PC-9 (cell line): ENCODE measurements at regions of chr19 and their contacts with region 1.

Region 1: DNA sequence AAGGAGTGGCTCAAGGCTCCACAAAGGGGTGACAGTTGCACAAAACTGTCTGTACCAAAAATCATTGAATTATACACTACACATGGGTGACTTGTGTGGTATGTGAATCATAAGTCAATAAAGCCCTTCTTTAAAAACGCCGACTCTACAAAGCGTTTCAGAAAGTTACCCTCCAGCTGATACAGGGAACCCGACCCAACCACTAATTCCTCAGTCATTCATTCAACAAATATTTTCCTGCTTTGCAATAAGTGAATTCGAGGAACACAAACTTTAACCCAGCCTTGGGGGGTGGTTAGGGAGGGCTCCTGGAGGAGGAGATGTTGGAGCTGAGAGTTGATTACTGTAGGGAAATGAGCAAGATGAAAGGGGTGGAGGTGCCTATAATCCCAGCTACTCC is 32.0 kb downstream of the LTBP4 start:
- DNase-seq: peak in 1 of 2 experiments; percentile 45
- H3K4me3 ChIP-seq: no peak overlapping the region
- H3K27ac ChIP-seq: no peak overlapping the region
- H3K4me1 ChIP-seq: no peaks in the 10 kb centered on the region
- H3K27me3 ChIP-seq: no peaks in the 10 kb centered on the region
- CTCF ChIP-seq: no peak

Region 2: DNA sequence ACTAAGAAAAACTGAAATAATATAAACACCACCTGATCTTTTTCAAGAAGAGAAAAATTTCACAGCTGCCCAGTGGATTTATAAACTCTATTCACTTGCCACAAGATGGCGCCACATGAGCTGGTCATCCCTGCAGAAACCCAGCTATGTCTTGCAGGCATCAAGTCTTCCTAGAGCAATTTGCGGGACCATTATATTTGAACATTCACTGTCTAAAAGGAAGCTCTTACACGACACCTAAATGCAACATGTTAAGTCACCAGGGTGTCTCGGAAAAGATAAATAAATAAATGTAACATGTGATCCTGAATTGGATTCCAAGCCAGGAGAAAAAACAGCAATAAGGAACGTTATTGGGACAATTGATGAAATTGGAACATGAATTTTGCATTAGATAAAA is 327.8 kb before region 1 on chr19:
- CTCF ChIA-PET with region 1: interaction called, 3 read pairs
- POLR2A ChIA-PET with region 1: no interaction called
- intact Hi-C with region 1: loop called (anchors 1 kb)
- DNase-seq: peak; percentile 67 to 74
- H3K4me3 ChIP-seq: no peak overlapping the region
- H3K27ac ChIP-seq: no peak overlapping the region
- H3K4me1 ChIP-seq: no peaks in the 10 kb centered on the region
- H3K27me3 ChIP-seq: no peaks in the 10 kb centered on the region
- CTCF ChIP-seq: peak; percentile 86

Region 3: GRCh38 chr19:40549007-40549708 is 84.0 kb before region 1 on chr19:
- CTCF ChIA-PET with region 1: no interaction called
- POLR2A ChIA-PET with region 1: no interaction called
- intact Hi-C with region 1: loop called (anchors 5 kb)
- DNase-seq: peak in 1 of 2 experiments; percentile 68
- H3K4me3 ChIP-seq: peak overlapping the region; percentile 35; the same call in 1 of the 2 replicates
- H3K27ac ChIP-seq: no peak overlapping the region
- H3K4me1 ChIP-seq: no peaks in the 10 kb centered on the region
- H3K27me3 ChIP-seq: peaks cover 23% of the 10 kb centered on the region
- CTCF ChIP-seq: peak; percentile 60

Region 4: DNA sequence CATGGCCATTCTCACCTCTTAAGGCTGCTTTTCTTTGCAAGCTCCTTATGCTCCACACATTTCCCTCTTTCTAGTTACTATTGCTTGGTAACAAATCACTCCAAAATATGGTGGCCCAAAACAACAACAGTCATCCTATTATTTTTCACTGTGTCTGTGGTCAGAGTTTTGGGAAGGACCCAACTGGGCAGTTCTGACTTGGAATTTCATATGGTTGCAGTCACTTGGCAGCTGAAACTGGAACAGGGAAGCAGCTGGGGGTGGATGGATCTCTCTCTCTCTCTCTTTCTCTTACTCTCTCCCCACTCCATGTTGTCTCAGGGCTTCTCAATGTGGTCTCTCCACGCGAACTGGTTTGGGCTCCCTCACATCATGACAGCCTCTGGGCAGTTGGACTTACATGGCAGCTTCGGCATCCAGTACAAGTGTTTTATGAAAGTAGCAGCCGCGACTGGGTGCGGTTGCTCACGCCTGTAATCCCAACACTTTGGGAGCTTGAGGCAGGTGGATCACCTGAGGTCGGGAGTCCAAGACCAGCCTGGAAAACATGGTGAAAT is 17.6 kb after region 1 on chr19:
- CTCF ChIA-PET with region 1: interaction called, 18 read pairs
- POLR2A ChIA-PET with region 1: interaction called, 32 read pairs
- intact Hi-C with region 1: no loop called
- DNase-seq: no peak
- H3K4me3 ChIP-seq: no peak overlapping the region
- H3K27ac ChIP-seq: no peak overlapping the region
- H3K4me1 ChIP-seq: peaks cover 10% of the 10 kb centered on the region
- H3K27me3 ChIP-seq: no peaks in the 10 kb centered on the region
- CTCF ChIP-seq: no peak